Thyroid gland (tissue), 4 donors: ENCODE measurements at regions of chr11 and their contacts with region 1.

Region 1: GRCh38 chr11:134139873-134140331 is 71.0 kb downstream of the JAM3 start:
- DNase-seq: peak; percentile 56 to 58
- H3K4me3 ChIP-seq: no peak overlapping the region
- H3K27ac ChIP-seq: no peak overlapping the region
- H3K4me1 ChIP-seq: no peaks in the 10 kb centered on the region
- H3K27me3 ChIP-seq: no peaks in the 10 kb centered on the region
- CTCF ChIP-seq: peak in 5 of 6 experiments; percentile 63 to 91 (median 79)
- POLR2A ChIP-seq: no peak

Region 2: GRCh38 chr11:133927690-133928627 is 211.9 kb before region 1 on chr11:
- intact Hi-C with region 1: loop called (anchors 5 kb)
- DNase-seq: peak; percentile 64 to 65
- H3K4me3 ChIP-seq: no peak overlapping the region
- H3K27ac ChIP-seq: no peak overlapping the region
- H3K4me1 ChIP-seq: no peaks in the 10 kb centered on the region
- H3K27me3 ChIP-seq: no peaks in the 10 kb centered on the region
- CTCF ChIP-seq: peak; percentile 52 to 89 (median 82)
- POLR2A ChIP-seq: no peak

Region 3: GRCh38 chr11:134050541-134051383 is 89.1 kb before region 1 on chr11:
- intact Hi-C with region 1: loop called (anchors 5 kb)
- DNase-seq: peak; percentile 64 to 76
- H3K4me3 ChIP-seq: no peak overlapping the region
- H3K27ac ChIP-seq: no peak overlapping the region
- H3K4me1 ChIP-seq: peaks cover 0 to 7% of the 10 kb centered on the region in 2 donors
- H3K27me3 ChIP-seq: no peaks in the 10 kb centered on the region
- CTCF ChIP-seq: peak; percentile 80 to 96 (median 88)
- POLR2A ChIP-seq: peak in 1 of 2 donors; percentile 8

Region 4: DNA sequence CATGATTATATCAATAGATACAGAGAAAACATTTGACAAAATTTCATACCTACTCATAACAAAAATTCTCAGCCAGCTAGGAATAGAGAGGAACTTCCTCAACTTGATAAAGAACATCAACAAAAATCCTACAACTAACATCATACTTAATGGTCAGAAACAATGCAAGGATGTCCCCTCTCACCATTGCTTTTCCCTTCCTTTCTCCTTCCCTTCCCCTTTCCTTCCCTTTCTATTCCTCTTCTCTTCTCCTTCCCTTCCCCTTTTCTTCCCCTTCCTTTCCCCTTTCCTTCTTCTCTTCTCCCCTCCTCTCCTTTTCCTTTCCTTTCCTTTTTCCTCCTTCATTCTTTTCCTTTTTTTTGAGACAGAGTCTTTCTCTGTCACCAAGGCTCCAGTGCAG is 690.4 kb after region 1 on chr11:
- intact Hi-C with region 1: no loop called
- DNase-seq: no peak
- H3K4me3 ChIP-seq: no peak overlapping the region
- H3K27ac ChIP-seq: no peak overlapping the region
- H3K4me1 ChIP-seq: no peaks in the 10 kb centered on the region
- H3K27me3 ChIP-seq: no peaks in the 10 kb centered on the region
- CTCF ChIP-seq: no peak
- POLR2A ChIP-seq: no peak